PC-3 (cell line): ENCODE measurements at regions of chr1 and their contacts with region 1.

Region 1: DNA sequence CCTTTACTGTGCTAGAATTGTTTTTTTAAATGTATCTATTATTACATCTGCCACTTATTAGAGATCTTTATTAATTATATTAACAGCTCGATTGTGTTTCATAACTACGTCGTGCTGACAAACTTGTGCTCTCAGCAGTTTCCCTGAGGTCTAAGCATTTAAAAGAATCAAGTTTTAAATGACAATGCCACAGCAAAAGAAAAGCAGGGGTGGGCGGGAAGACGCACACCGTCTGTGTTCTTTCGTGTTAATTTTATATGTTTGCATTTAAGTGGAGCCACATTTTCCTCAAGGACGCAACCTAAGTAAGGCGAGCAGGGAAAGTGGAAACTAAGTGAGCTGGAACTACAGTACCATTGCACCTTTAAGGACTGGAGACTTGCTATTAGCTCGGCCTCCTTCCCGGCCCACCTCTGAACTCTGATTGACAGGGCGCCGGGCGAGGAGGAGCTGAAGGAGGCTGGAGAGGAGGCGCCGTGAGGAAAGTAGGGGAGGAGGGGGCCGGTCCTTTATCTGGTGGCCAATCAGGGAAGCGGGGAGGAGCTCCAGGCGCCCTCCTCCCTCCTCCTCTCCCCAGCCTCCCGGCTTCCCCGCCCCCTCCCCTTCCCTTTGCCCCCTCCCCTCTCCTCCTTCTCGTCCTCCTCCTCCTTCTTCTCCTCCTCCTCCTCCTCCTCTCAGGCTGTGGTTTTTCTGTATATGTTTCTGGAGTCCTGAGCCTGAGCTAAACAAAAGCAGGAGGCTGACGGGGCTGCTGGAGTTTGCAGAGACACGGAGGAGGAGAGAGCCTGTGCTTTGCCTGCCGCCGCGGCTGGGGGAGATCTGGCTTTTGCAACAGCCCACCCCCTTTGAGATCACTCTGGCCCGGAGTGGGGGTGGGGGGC is at the start of gene PBX1:
- DNase-seq: peak; percentile 98
- ATAC-seq: peak; percentile 98
- H3K4me3 ChIP-seq: peak within 1 kb of the TSS; percentile 71
- H3K27ac ChIP-seq: no peak within 1 kb of the TSS
- H3K4me1 ChIP-seq: peaks cover 10% of the 10 kb centered on the region
- H3K27me3 ChIP-seq: no peaks in the 10 kb centered on the region
- CTCF ChIP-seq: no peak
- total RNA-seq, gene PBX1: 8.4 and 9.8 TPM in 2 replicates

Region 2: GRCh38 chr1:164602480-164603093 is 43.9 kb after region 1 on chr1:
- CTCF ChIA-PET with region 1: interaction called, 4 read pairs
- POLR2A ChIA-PET with region 1: interaction called, 20 read pairs
- intact Hi-C with region 1: loop called (anchors 2 kb)
- DNase-seq: peak; percentile 37
- ATAC-seq: peak; percentile 45
- H3K4me3 ChIP-seq: peak overlapping the region; percentile 37
- H3K27ac ChIP-seq: no peak overlapping the region
- H3K4me1 ChIP-seq: peaks cover 33% of the 10 kb centered on the region
- H3K27me3 ChIP-seq: no peaks in the 10 kb centered on the region
- CTCF ChIP-seq: no peak

Region 3: DNA sequence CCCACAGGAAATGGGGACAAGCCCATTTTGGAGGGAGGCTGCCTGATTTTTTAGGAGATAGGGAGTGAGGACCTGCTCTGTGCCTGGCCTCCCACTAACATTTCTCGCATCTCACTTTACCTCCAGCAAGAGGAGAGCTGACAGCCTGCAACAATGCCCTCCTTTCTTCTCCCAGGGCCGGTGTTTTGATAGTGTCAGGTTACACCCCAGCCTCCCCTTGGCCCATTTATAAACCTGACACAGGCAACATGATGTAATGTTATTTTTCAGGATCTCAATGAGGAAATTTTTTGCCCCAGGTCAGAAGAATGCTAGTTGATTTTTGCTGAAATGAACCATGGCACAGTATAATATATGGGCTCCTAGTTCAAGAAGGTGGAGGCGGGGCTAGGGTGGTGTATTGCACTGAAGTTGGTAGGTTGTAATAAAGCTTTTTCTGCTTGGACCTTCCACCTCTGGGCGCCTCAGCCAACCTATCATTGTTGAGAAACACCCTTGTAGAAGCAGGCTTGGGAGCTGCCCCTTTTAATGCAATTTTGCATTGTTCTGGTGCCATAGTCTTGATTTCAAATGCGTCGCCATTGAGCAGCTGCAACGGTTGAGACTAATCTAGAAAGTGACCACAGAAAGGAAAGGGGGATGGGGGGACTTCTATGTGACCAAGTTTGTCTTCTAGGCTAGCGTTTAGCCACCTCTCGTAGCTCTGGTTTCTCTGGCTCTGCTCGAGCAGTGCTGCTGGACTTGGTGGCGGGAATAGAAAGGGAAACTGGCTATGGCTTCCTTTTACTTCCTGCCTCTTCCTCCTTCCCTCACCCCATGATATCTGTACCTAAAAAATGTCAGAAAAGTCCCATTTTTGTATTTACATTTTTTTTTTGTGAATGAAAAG is 53.3 kb after region 1 on chr1:
- CTCF ChIA-PET with region 1: interaction called, 4 read pairs
- POLR2A ChIA-PET with region 1: interaction called, 4 read pairs
- intact Hi-C with region 1: loop called (anchors 2 kb)
- DNase-seq: peak; percentile 93
- ATAC-seq: peak; percentile 94
- H3K4me3 ChIP-seq: peak overlapping the region; percentile 8; the same call in 1 of the 2 replicates
- H3K27ac ChIP-seq: peak overlapping the region; percentile 51
- H3K4me1 ChIP-seq: peaks cover 25% of the 10 kb centered on the region
- H3K27me3 ChIP-seq: no peaks in the 10 kb centered on the region
- CTCF ChIP-seq: no peak

Region 4: GRCh38 chr1:164707868-164708331 is 149.2 kb after region 1 on chr1:
- CTCF ChIA-PET with region 1: no interaction called
- POLR2A ChIA-PET with region 1: interaction called, 3 read pairs
- intact Hi-C with region 1: loop called (anchors 2 kb)
- DNase-seq: peak; percentile 97
- ATAC-seq: peak; percentile 79
- H3K4me3 ChIP-seq: peak overlapping the region; percentile 8; the same call in 1 of the 2 replicates
- H3K27ac ChIP-seq: peak overlapping the region; percentile 95
- H3K4me1 ChIP-seq: peaks cover 47% of the 10 kb centered on the region
- H3K27me3 ChIP-seq: no peaks in the 10 kb centered on the region
- CTCF ChIP-seq: no peak

Region 5: DNA sequence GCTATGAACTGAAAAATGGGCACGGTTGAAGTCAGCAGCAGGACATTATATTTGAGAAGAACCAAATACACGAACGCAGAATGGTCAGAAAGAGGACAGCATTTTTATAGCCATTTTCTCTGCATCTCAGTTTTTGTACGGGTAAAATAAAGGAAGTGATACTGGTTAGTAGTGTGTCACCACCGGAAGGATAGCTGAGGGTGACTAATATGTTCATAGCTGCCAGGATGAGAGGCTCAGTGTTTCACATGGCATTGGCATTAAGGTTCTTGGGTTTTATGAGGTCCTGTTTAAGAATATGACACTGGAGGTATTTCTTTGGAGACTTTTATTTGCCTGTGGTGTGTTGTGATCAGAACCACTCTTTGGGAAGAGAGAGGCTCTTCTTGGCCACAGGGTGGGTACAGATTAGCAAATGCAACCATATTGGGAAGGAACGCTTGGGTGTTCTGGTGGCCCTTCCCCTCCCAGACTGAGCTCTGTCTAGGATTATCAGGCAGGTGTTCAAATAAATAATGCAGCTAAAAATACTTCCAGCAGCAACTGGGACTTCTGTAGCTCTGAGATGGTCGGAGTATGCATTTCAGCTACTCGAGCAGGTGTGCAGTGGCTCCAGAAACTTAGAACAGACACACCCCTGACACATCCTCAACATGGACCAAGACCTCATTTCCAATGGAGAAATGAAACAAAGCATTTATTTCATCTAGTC is 158.4 kb after region 1 on chr1:
- CTCF ChIA-PET with region 1: no interaction called
- POLR2A ChIA-PET with region 1: interaction called, 13 read pairs
- intact Hi-C with region 1: loop called (anchors 2 kb)
- DNase-seq: peak; percentile 95
- ATAC-seq: peak; percentile 88
- H3K4me3 ChIP-seq: peak overlapping the region; percentile 15; the same call in 1 of the 2 replicates
- H3K27ac ChIP-seq: peak overlapping the region; percentile 90
- H3K4me1 ChIP-seq: peaks cover 42% of the 10 kb centered on the region
- H3K27me3 ChIP-seq: no peaks in the 10 kb centered on the region
- CTCF ChIP-seq: no peak

Region 6: DNA sequence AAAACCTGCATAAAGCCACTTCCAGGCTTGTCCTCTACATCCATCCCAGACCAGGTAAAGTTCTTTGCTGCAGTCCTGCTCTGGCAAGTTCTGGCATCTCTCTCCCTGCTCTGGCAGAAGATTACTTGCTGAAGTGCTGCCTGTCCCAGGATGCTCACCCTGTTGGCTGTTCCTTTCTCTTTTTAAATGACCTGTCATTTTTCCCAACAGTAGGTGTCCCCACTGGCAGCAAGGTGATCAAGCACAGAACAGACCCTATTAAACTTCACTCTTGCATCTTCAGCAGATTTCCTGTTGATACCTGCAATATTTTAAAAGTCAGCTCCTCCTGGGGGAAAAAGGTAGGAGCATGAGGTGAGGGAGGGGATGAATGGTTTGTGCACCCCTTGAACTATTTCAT is 332.9 kb after region 1 on chr1:
- CTCF ChIA-PET with region 1: no interaction called
- POLR2A ChIA-PET with region 1: no interaction called
- intact Hi-C with region 1: no loop called
- DNase-seq: peak; percentile 18
- ATAC-seq: peak; percentile 50; the same call in 1 of the 2 replicates
- H3K4me3 ChIP-seq: no peak overlapping the region
- H3K27ac ChIP-seq: no peak overlapping the region
- H3K4me1 ChIP-seq: no peaks in the 10 kb centered on the region
- H3K27me3 ChIP-seq: peaks cover 39% of the 10 kb centered on the region
- CTCF ChIP-seq: no peak; the same call in 1 of the 2 replicates

Region 7: GRCh38 chr1:165063181-165063965 is 504.7 kb after region 1 on chr1:
- CTCF ChIA-PET with region 1: no interaction called
- POLR2A ChIA-PET with region 1: no interaction called
- intact Hi-C with region 1: no loop called
- DNase-seq: no peak
- ATAC-seq: no peak
- H3K4me3 ChIP-seq: no peak overlapping the region
- H3K27ac ChIP-seq: no peak overlapping the region
- H3K4me1 ChIP-seq: 0 out of 2 replicates have a peak, but pooled peaks cover 3% of the 10 kb centered on the region
- H3K27me3 ChIP-seq: peaks cover 10% of the 10 kb centered on the region
- CTCF ChIP-seq: no peak